CD4-positive, alpha-beta memory T cell (primary cell): ENCODE measurements at regions of chr3 and their contacts with region 1.

Region 1: GRCh38 chr3:152346740-152347139 is 78.0 kb downstream of the MBNL1 start:
- DNase-seq: no peak
- H3K4me3 ChIP-seq: no peak overlapping the region
- H3K4me3 Mint-ChIP-seq: no peak overlapping the region
- H3K27ac ChIP-seq: no peak overlapping the region
- H3K27ac Mint-ChIP-seq: no peak overlapping the region
- H3K4me1 ChIP-seq: peaks cover 88% of the 10 kb centered on the region
- H3K4me1 Mint-ChIP-seq: peaks cover 35 to 43% (median 40%) of the 10 kb centered on the region in 4 donors
- H3K27me3 ChIP-seq: no peaks in the 10 kb centered on the region
- H3K27me3 Mint-ChIP-seq: no peaks in the 10 kb centered on the region

Region 2: DNA sequence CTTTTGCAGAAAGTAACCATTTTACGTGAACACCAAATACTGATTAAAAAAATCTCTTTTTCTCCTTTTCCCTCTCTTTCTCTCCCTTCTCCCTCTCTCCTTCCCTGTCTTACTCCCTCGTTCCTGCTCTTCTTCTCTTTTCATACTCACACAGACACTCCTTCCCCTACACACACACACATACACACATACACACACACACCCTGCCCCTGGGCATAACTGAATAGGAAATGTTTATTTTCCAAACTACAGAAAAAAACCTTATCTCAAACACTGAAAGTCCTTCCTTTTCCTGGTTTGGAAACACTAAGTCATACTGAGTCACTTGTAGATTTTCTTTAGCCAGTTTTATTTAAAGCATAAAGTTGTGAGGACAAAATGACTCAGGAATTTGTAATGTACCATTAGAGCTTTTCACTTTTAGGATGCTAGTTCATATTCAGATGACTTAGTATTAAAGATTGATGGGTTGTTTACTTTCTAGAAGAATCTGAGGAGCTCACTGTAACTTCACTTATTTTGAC is 15.7 kb before region 1 on chr3:
- CTCF ChIA-PET with region 1: interaction called, 5 read pairs
- POLR2A ChIA-PET with region 1: interaction called, 5 read pairs
- intact Hi-C with region 1: loop called (anchors 2 kb)
- DNase-seq: no peak
- H3K4me3 ChIP-seq: no peak overlapping the region
- H3K4me3 Mint-ChIP-seq: peak overlapping the region in 6 of 8 donors; percentile 20 to 76 (median 32)
- H3K27ac ChIP-seq: peak overlapping the region; percentile 28
- H3K27ac Mint-ChIP-seq: peak overlapping the region; percentile 35 to 92 (median 79)
- H3K4me1 ChIP-seq: peaks cover 96% of the 10 kb centered on the region
- H3K4me1 Mint-ChIP-seq: peaks cover 59 to 90% (median 75%) of the 10 kb centered on the region in 4 donors
- H3K27me3 ChIP-seq: no peaks in the 10 kb centered on the region
- H3K27me3 Mint-ChIP-seq: no peaks in the 10 kb centered on the region

Region 3: GRCh38 chr3:152419748-152420147 is 73.0 kb after region 1 on chr3:
- CTCF ChIA-PET with region 1: no interaction called
- POLR2A ChIA-PET with region 1: no interaction called
- intact Hi-C with region 1: no loop called
- DNase-seq: no peak
- H3K4me3 ChIP-seq: no peak overlapping the region
- H3K4me3 Mint-ChIP-seq: peak overlapping the region in 3 of 8 donors; percentile 26 to 61 (median 53)
- H3K27ac ChIP-seq: no peak overlapping the region
- H3K27ac Mint-ChIP-seq: peak overlapping the region in 5 of 7 donors; percentile 42 to 91 (median 81)
- H3K4me1 ChIP-seq: peaks cover 67% of the 10 kb centered on the region
- H3K4me1 Mint-ChIP-seq: peaks cover 51 to 86% (median 71%) of the 10 kb centered on the region in 4 donors
- H3K27me3 ChIP-seq: no peaks in the 10 kb centered on the region
- H3K27me3 Mint-ChIP-seq: no peaks in the 10 kb centered on the region